ENCODE measurements at regions of chr3 and their contacts with region 1.

Region 1: DNA sequence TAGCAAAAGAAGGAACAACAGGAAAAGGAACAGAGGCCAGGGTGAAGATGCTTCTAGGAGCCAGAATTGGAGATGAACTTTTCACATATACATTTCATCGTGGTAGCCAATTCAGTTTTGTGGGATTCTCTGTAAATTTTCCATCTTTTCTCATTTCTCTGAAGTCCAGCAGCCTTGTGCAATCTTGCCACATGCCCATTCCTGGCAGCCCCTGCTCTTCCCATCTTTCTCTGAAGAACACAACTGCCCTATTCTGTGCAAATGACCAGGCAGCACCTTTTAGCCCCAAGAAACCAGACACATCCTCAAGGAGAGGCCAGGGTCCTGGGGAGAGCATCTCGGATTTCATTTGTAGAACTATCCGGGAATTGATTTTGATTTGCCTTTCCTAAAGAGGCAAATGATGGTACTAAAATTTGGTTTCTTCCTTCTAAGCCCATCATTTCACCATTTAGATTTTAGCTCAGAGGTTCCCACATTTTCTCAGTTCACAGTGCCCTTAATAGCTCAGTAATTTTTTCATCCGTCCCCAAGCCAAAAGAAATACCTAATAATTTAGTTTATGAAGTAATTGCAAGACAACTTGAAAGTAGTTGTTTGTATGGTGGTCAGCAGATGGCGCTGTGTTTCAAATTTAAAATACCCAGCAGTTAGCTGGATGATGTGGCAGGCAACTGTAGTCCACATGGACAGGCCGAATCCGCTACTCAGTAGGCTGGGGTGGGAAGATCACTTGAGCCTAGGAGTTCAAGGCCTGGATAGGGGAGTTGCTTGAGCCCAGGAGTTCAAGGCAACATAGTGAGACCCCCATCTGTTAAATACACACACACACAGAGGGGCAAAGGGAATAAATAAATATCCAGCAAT is 61.3 kb upstream of the ACKR4 start:
- DNase-seq: peak; percentile 65 to 88
- H3K4me3 ChIP-seq: no peak overlapping the region
- H3K27ac ChIP-seq: peak overlapping the region in 1 of 5 donors; percentile 19
- H3K4me1 ChIP-seq: peaks cover 0 to 4% (median 0%) of the 10 kb centered on the region in 4 donors
- H3K27me3 ChIP-seq: no peaks in the 10 kb centered on the region
- CTCF ChIP-seq: peak in 5 of 7 experiments; percentile 28 to 69 (median 61)
- EP300 ChIP-seq: no peak
- POLR2A ChIP-seq: no peak

Region 2: GRCh38 chr3:131819381-131820055 is 716.3 kb before region 1 on chr3:
- intact Hi-C with region 1: no loop called
- DNase-seq: peak in 1 of 2 donors; percentile 15
- H3K4me3 ChIP-seq: no peak overlapping the region
- H3K27ac ChIP-seq: no peak overlapping the region
- H3K4me1 ChIP-seq: no peaks in the 10 kb centered on the region
- H3K27me3 ChIP-seq: no peaks in the 10 kb centered on the region
- CTCF ChIP-seq: no peak
- EP300 ChIP-seq: no peak
- POLR2A ChIP-seq: no peak

Region 3: GRCh38 chr3:132641837-132642538 is 106.2 kb after region 1 on chr3:
- intact Hi-C with region 1: loop called (anchors 5 kb)
- DNase-seq: peak in 1 of 2 donors; percentile 72
- H3K4me3 ChIP-seq: no peak overlapping the region
- H3K27ac ChIP-seq: no peak overlapping the region
- H3K4me1 ChIP-seq: no peaks in the 10 kb centered on the region
- H3K27me3 ChIP-seq: no peaks in the 10 kb centered on the region
- CTCF ChIP-seq: peak in 5 of 7 experiments; percentile 37 to 76 (median 75)
- EP300 ChIP-seq: no peak
- POLR2A ChIP-seq: no peak

Region 4: GRCh38 chr3:132669256-132669777 is 133.5 kb after region 1 on chr3:
- intact Hi-C with region 1: no loop called
- DNase-seq: no peak
- H3K4me3 ChIP-seq: no peak overlapping the region
- H3K27ac ChIP-seq: no peak overlapping the region
- H3K4me1 ChIP-seq: peaks cover 0 to 50% (median 19%) of the 10 kb centered on the region in 4 donors
- H3K27me3 ChIP-seq: no peaks in the 10 kb centered on the region
- CTCF ChIP-seq: no peak
- EP300 ChIP-seq: no peak
- POLR2A ChIP-seq: no peak